Heart left ventricle (tissue), 16 donors: ENCODE measurements at regions of chr7 and their contacts with region 1.

Region 1: GRCh38 chr7:46352004-46352954 is 431.2 kb upstream of the IGFBP3 start:
- DNase-seq: peak in 3 of 5 donors; percentile 20 to 45 (median 23)
- ATAC-seq: peak in 2 of 4 donors; percentile 58 to 74
- H3K4me3 ChIP-seq: no peak overlapping the region
- H3K27ac ChIP-seq: no peak overlapping the region
- H3K4me1 ChIP-seq: no peaks in the 10 kb centered on the region
- H3K27me3 ChIP-seq: peaks cover 0 to 3% (median 0%) of the 10 kb centered on the region in 9 donors
- CTCF ChIP-seq: peak; percentile 37 to 77 (median 68)
- POLR2A ChIP-seq: no peak

Region 2: GRCh38 chr7:45917658-45918057 is 434.6 kb before region 1 on chr7:
- intact Hi-C with region 1: loop called (anchors 1 to 5 kb)
- DNase-seq: peak; percentile 79 to 91 (median 83)
- ATAC-seq: peak; percentile 27 to 58 (median 50)
- H3K4me3 ChIP-seq: peak overlapping the region in 9 of 12 donors; percentile 1 to 72 (median 61)
- H3K27ac ChIP-seq: peak overlapping the region in 1 of 12 donors; percentile 27
- H3K4me1 ChIP-seq: peaks cover 0 to 44% (median 20%) of the 10 kb centered on the region in 12 donors
- H3K27me3 ChIP-seq: peaks cover 0 to 48% (median 0%) of the 10 kb centered on the region in 9 donors
- CTCF ChIP-seq: peak; percentile 83 to 98 (median 96)
- POLR2A ChIP-seq: no peak

Region 3: DNA sequence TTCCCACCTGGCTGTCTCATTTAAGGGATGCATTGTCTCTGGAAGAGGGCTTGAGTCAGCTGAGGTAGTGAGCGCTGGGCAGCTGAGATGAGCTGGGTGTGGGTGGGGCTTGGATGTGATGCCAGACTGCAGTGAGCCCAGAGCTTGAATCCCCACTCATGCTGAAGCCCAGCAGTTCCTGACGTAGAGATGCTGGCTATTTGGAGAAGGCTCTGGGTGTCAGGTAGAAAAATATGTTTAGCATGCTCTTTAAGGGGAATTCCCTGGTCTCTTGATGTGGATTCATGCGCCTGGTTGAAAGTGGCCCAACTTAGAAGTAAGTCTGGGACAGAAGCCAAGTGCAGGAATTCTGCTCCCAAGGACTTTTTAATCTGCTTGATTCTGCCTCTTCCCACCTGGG is 189.7 kb before region 1 on chr7:
- intact Hi-C with region 1: no loop called
- DNase-seq: no peak
- ATAC-seq: peak in 1 of 4 donors; percentile 50
- H3K4me3 ChIP-seq: no peak overlapping the region
- H3K27ac ChIP-seq: no peak overlapping the region
- H3K4me1 ChIP-seq: peaks cover 0 to 7% (median 0%) of the 10 kb centered on the region in 12 donors
- H3K27me3 ChIP-seq: no peaks in the 10 kb centered on the region
- CTCF ChIP-seq: no peak
- POLR2A ChIP-seq: no peak

Region 4: DNA sequence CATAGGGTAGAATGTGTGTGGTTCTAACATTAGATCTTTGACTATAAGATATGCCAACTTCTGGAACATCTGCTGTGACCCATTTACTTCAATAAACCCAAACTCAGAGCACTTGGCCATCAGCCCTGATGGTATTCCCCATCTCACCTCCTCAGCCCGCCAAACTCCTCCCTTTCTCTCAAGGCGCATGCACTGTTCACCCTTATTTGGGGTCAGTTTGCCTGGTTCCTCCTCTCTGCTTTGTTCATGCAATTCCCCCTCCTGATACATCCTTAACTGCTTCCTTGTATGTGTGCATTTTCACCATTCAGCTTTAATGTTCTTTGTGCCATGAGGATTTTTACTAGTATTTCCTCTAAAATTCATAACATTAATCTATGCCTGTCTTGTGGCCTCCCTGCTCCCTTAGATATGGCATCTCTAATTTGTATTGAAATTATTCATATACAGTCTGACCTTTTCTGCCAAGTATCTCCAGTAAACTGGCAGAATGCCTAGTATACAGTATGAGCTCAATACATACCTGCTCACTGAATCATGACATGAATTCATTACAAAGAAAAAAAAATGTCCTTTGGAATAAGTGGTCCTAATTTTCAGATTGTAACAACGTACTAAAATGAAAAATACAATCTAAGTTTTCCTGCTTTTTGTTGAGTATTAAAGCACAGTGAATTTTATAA is 94.4 kb before region 1 on chr7:
- intact Hi-C with region 1: no loop called
- DNase-seq: no peak
- ATAC-seq: no peak
- H3K4me3 ChIP-seq: no peak overlapping the region
- H3K27ac ChIP-seq: no peak overlapping the region
- H3K4me1 ChIP-seq: no peaks in the 10 kb centered on the region
- H3K27me3 ChIP-seq: no peaks in the 10 kb centered on the region
- CTCF ChIP-seq: no peak
- POLR2A ChIP-seq: no peak

Region 5: DNA sequence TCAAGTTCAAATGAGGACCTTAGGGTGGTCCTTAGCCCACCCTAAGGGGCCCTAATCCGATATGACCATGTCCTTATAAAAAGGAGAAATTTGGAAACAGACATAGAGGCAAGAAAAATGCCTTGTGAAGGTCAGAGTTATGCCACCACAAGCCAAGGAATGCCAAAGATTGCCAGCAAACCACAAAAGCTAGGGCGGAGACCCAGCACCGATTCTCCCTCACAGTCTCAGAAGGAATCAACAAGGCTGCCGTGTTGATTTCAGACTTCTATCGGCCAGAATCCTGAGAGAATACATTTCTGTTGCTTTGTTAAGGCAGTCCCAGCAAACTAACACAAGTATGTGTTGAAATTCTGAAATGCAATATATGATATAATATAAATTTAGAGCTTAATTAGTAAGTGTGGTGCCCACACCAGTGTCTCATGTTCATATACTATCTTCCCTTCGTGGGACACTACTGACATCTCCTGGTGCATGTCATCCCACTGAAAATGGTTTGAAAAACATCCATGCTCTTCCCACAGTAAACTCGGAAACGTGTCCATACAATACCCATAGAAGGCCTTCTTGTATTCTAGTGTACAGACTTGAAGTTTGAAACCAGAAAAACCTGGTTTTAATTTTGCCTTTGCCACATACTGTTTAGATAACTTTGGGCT is 880.6 kb after region 1 on chr7:
- intact Hi-C with region 1: loop called in 1 of 10 experiments (anchors 10 kb)
- DNase-seq: no peak
- ATAC-seq: peak in 3 of 4 donors; percentile 27 to 59 (median 36)
- H3K4me3 ChIP-seq: no peak overlapping the region
- H3K27ac ChIP-seq: no peak overlapping the region
- H3K4me1 ChIP-seq: peaks cover 0 to 11% (median 0%) of the 10 kb centered on the region in 12 donors
- H3K27me3 ChIP-seq: no peaks in the 10 kb centered on the region
- CTCF ChIP-seq: peak in 11 of 12 donors; percentile 4 to 49 (median 32)
- POLR2A ChIP-seq: no peak